ENCODE measurements at regions of chr5 and their contacts with region 1.

Region 1: DNA sequence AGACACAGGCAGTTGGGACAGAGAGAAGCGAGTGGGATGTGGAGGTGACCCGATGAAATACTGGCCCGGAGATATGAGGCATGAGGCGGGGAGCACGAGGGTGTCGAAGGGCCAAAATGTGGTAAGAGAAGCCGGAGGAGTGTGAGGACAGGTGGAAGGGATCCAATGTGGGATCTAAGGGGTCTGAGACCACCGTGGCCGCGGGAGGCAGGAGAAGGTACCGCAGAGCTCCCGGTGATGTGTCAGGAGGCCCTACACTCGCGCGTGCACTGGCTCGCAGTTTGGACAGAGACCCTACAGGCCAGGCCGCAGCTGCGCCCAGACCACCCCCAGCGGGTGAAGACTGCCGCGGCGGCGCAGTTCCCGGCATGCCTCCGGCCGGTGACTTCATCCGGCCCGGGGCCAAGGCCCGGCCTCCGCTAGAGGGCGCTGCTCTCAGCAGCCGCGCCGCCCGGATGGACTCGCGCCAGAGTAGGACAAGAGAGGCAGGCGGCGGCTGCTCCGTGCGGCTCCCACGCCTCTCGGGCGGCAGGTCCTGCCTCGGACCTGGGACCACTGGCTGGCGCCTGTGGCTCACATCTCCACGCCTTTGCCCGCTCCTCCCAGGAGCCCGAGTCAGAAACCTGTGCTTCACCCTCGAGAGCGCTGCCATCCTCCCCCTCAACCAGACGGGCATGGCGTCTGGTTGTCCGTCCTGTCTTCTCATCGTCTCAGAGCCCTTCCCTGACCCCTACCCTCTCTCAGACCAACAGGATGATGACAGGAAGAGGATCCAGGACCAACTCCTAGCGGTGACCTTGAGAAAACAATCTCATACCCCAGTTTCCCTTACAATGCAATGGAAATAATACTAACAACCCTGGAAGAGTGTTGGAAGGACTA is 35.4 kb upstream of the STING1 start:
- DNase-seq: peak; percentile 86 to 93 (median 90)
- H3K4me3 ChIP-seq: peak overlapping the region; percentile 43 to 87 (median 67)
- H3K27ac ChIP-seq: peak overlapping the region; percentile 73 to 99 (median 95)
- H3K27me3 ChIP-seq: no peaks in the 10 kb centered on the region
- CTCF ChIP-seq: peak; percentile 87 to 99 (median 97)

Region 2: DNA sequence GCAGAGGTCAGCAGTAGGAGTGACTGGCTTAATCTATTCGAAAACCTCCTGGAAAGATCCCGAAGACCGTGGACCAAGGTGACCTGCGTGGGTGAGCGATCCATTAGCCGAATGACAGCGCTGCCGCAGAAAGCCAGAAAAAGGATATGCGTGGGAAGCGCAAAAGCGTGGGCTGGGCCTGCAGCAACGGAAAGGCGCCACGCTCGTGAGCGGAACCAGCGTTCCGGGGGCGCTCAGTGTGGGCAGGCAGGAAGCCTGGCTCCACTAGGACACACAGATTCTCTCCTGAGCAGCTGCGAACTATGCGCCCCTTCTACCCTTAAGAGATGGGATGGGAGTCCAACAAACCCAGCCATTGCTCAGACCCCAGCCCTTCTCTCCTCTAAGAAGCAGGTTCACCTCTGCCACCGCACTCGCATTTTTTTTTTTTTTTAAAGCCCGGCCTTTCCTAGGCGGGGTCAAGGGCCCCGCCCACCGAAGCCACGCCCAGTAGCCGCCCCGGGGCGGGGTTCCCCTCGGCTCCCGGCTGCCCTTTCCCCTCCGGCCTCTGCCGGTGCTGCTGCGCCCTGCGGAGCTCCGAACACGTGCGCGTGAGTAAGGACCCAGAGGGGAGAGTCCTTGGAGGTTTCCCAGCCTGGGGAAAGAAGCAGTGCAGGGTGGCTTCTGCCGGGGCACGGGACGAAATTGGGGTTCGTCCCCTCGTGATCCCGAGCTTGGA is 244.2 kb before region 1 on chr5:
- intact Hi-C with region 1: loop called in 1 of 2 experiments (anchors 10 kb)
- DNase-seq: peak; percentile 67 to 89 (median 76)
- H3K4me3 ChIP-seq: peak overlapping the region; percentile 43 to 89 (median 70)
- H3K27ac ChIP-seq: peak overlapping the region; percentile 27 to 97 (median 87)
- H3K27me3 ChIP-seq: no peaks in the 10 kb centered on the region
- CTCF ChIP-seq: peak in 34 of 56 donors; percentile 4 to 53 (median 30)

Region 3: DNA sequence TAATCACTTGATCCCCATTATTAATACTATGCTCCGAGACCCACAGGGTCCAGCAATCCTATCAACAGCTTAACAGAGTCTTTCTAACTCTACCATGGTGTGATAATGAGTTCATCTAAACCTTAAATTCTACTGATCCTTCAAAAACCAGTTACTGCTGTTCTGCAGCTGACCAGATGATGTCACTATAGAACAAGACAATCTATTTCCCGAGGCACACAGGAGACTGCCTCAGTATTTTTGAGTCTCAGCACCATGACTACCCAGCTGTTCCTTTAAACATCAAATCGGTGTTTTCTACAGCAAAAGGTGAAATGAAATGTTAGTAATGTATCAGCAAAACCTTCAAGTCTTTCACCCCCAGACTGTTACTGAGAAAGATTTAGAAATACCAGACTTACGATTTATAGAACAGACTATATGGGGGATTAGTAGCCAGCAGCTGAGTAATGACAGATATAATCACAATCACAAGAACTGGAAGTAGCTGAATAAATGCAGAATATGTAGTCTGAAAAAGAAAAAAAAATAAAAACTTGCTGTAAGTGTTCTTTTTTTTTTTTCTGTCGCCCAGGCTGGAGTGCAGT is 95.5 kb before region 1 on chr5:
- intact Hi-C with region 1: loop called (anchors 2 to 5 kb)
- DNase-seq: peak in 3 of 10 donors; percentile 11 to 46 (median 38)
- H3K4me3 ChIP-seq: no peak overlapping the region
- H3K27ac ChIP-seq: peak overlapping the region in 37 of 59 donors; percentile 1 to 72 (median 43)
- H3K27me3 ChIP-seq: no peaks in the 10 kb centered on the region
- CTCF ChIP-seq: peak; percentile 53 to 94 (median 81)

Region 4: DNA sequence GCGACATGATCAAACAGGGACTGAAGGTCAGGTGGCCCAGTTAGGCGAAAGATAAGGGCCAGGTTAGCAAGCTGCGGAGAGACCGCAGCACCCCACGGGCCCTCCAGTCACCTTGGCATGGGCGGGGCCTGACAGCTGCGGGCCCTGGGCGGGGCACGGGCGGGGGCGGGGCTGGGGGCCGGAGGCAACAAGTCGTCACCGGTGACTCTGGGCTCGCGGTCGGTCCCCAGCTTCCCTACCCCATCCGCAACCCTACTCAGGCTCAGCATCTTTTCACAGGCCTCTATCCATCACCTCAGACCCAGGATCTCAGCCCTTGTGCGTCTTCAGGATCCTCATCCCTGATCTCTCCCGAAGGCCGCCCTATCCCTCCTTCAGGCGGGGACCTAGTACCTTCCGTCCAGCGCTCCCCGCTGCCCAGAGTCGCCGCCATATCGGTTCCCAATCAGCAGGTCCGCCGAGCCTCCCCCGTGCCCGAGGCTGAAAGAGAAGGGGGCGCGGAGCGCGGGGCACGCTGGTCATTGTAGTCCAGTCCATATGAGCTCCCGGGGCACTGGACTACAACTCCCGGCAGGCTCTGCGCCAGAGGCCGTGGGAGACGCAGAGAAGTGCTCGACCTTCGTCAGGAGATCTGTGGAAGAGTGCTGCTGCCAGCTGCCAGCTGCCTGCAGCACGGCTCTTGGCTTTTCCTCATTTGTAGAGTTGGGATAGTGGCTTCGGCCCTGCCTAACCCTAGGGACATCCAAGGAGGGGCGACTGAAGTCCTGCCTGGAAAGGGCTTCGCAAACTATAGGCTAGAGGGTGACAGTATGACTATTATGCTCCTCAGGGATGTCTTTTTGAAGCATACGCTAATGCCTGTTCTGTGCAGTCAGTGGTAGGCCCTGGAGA is 78.7 kb before region 1 on chr5 and contains the start of gene DNAJC18:
- intact Hi-C with region 1: loop called (anchors 5 kb)
- DNase-seq: peak; percentile 97 to 99 (median 98)
- H3K4me3 ChIP-seq: peak within 1 kb of the TSS; percentile 61 to 99 (median 92)
- H3K27ac ChIP-seq: peak within 1 kb of the TSS; percentile 76 to 99 (median 97)
- H3K27me3 ChIP-seq: no peaks in the 10 kb centered on the region
- CTCF ChIP-seq: peak in 40 of 56 donors; percentile 5 to 59 (median 27)
- total RNA-seq, gene DNAJC18: 26.6 to 69.5 (median 49.7) TPM

Measured in dorsolateral prefrontal cortex (tissue), 120 donors.